ENCODE measurements at regions of chr6 and their contacts with region 1.

Region 1: GRCh38 chr6:125314019-125314581 is 12.3 kb upstream of the HDDC2 start:
- DNase-seq: peak; percentile 51 to 77 (median 62)
- ATAC-seq: peak; percentile 97
- H3K4me3 ChIP-seq: no peak overlapping the region
- H3K27ac ChIP-seq: no peak overlapping the region
- H3K4me1 ChIP-seq: no peaks in the 10 kb centered on the region
- H3K27me3 ChIP-seq: peaks cover 4 to 5% of the 10 kb centered on the region in 2 experiments; a peak in 3 of 5 replicates
- CTCF ChIP-seq: peak; percentile 93 to 96 (median 96)
- EP300 ChIP-seq: no peak
- POLR2A ChIP-seq: no peak
- RAD21 ChIP-seq: peak; percentile 91 to 95

Region 2: DNA sequence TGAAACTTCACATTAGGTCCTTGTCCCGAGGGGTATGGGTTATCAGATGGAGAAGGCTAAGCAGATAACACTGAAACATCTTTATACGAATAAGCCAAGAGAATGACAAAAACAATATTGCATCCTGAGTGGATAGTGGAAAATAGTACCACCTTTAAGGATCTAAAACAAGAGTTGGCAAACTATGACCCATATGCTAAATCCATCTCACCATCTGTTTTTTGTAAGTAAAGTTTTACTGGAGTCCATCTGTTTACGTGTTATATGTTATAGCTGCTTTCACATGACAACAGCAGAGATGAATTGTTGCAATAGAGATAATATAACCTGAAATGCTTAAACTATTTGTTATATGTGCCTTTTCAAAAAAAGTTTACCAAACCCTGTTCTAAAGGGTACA is 1601.3 kb before region 1 on chr6:
- CTCF ChIA-PET with region 1: no interaction called
- POLR2A ChIA-PET with region 1: no interaction called
- in situ Hi-C with region 1: no loop called
- intact Hi-C with region 1: no loop called
- DNase-seq: no peak
- ATAC-seq: no peak
- H3K4me3 ChIP-seq: no peak overlapping the region
- H3K27ac ChIP-seq: no peak overlapping the region
- H3K4me1 ChIP-seq: no peaks in the 10 kb centered on the region; a peak in 1 of 5 replicates
- H3K27me3 ChIP-seq: no peaks in the 10 kb centered on the region
- CTCF ChIP-seq: no peak
- EP300 ChIP-seq: no peak
- POLR2A ChIP-seq: no peak
- RAD21 ChIP-seq: no peak

Region 3: GRCh38 chr6:124870611-124871459 is 443.3 kb before region 1 on chr6:
- CTCF ChIA-PET with region 1: no interaction called
- POLR2A ChIA-PET with region 1: no interaction called
- in situ Hi-C with region 1: loop called (anchors 10 kb)
- intact Hi-C with region 1: loop called (anchors 1 kb)
- DNase-seq: peak in 2 of 4 experiments; percentile 21 to 50
- ATAC-seq: peak; percentile 55; the same call in 1 of the 3 replicates
- H3K4me3 ChIP-seq: no peak overlapping the region
- H3K27ac ChIP-seq: no peak overlapping the region
- H3K4me1 ChIP-seq: no peaks in the 10 kb centered on the region; a peak in 1 of 5 replicates
- H3K27me3 ChIP-seq: no peaks in the 10 kb centered on the region
- CTCF ChIP-seq: peak; percentile 40 to 85 (median 55); a peak in 4 of 6 replicates
- EP300 ChIP-seq: no peak
- POLR2A ChIP-seq: no peak
- RAD21 ChIP-seq: peak; percentile 95 to 96

Region 4: DNA sequence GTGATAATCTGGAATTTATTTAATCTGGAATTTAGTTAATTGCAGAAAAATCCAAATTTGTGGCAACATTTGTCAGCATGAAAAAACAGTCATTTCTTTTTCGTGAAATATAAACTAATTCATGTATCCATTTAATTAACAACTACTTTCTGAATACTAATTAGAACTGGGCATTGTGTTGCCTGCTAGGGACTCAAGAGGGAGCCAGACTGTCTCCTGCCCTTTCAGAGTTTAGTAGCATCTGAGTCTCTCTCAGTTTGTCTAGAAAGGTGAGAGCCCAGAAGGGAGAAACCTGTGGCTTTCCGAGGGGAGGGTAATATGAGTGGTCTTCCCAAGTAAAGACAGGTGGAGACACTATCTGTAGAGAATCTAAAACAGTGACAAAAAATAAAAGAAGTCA is 198.5 kb after region 1 on chr6:
- CTCF ChIA-PET with region 1: no interaction called
- POLR2A ChIA-PET with region 1: no interaction called
- in situ Hi-C with region 1: no loop called
- intact Hi-C with region 1: loop called (anchors 10 kb)
- DNase-seq: peak in 2 of 4 experiments; percentile 16 to 26
- ATAC-seq: peak; percentile 85
- H3K4me3 ChIP-seq: no peak overlapping the region
- H3K27ac ChIP-seq: no peak overlapping the region
- H3K4me1 ChIP-seq: no peaks in the 10 kb centered on the region
- H3K27me3 ChIP-seq: no peaks in the 10 kb centered on the region
- CTCF ChIP-seq: peak; percentile 42 to 61 (median 45); a peak in 3 of 6 replicates
- EP300 ChIP-seq: no peak
- POLR2A ChIP-seq: no peak
- RAD21 ChIP-seq: peak; percentile 63 to 65

Region 5: DNA sequence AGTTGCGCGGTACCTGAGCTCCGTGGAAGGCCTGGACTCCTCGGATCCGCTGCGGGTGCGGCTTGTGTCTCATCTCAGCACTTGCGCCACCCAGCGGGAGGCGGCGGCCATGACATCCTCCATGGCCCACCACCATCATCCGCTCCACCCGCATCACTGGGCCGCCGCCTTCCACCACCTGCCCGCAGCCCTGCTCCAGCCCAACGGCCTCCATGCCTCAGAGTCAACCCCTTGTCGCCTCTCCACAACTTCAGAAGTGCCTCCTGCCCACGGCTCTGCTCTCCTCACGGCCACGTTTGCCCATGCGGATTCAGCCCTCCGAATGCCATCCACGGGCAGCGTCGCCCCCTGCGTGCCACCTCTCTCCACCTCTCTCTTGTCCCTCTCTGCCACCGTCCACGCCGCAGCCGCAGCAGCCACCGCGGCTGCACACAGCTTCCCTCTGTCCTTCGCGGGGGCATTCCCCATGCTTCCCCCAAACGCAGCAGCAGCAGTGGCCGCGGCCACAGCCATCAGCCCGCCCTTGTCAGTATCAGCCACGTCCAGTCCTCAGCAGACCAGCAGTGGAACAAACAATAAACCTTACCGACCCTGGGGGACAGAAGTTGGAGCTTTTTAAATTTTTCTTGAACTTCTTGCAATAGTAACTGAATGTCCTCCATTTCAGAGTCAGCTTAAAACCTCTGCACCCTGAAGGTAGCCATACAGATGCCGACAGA is 445.2 kb after region 1 on chr6:
- CTCF ChIA-PET with region 1: interaction called, 10 read pairs
- POLR2A ChIA-PET with region 1: no interaction called
- in situ Hi-C with region 1: loop called (anchors 5 kb)
- intact Hi-C with region 1: loop called (anchors 1 kb)
- DNase-seq: peak; percentile 77 to 84 (median 80)
- ATAC-seq: peak; percentile 98
- H3K4me3 ChIP-seq: no peak overlapping the region; the same call in 1 of the 2 replicates
- H3K27ac ChIP-seq: no peak overlapping the region
- H3K4me1 ChIP-seq: peaks cover 3 to 8% of the 10 kb centered on the region in 2 experiments; a peak in 3 of 5 replicates
- H3K27me3 ChIP-seq: peaks cover 7 to 14% of the 10 kb centered on the region in 2 experiments
- CTCF ChIP-seq: peak; percentile 78 to 88 (median 84)
- EP300 ChIP-seq: no peak
- POLR2A ChIP-seq: no peak
- RAD21 ChIP-seq: peak; percentile 48 to 77

Region 6: GRCh38 chr6:125974214-125974866 is 660.2 kb after region 1 on chr6:
- CTCF ChIA-PET with region 1: interaction called, 3 read pairs
- POLR2A ChIA-PET with region 1: no interaction called
- in situ Hi-C with region 1: loop called (anchors 5 kb)
- intact Hi-C with region 1: loop called (anchors 1 kb)
- DNase-seq: peak in 3 of 4 experiments; percentile 39 to 64 (median 41)
- ATAC-seq: peak; percentile 90
- H3K4me3 ChIP-seq: no peak overlapping the region
- H3K27ac ChIP-seq: no peak overlapping the region
- H3K4me1 ChIP-seq: no peaks in the 10 kb centered on the region
- H3K27me3 ChIP-seq: no peaks in the 10 kb centered on the region
- CTCF ChIP-seq: peak; percentile 45 to 80 (median 50); a peak in 5 of 6 replicates
- EP300 ChIP-seq: peak; percentile 23; the same call in 1 of the 2 replicates
- POLR2A ChIP-seq: no peak
- RAD21 ChIP-seq: peak; percentile 81 to 84